CD14-positive monocyte (primary cell): ENCODE measurements at regions of chr11 and their contacts with region 1.

Region 1: DNA sequence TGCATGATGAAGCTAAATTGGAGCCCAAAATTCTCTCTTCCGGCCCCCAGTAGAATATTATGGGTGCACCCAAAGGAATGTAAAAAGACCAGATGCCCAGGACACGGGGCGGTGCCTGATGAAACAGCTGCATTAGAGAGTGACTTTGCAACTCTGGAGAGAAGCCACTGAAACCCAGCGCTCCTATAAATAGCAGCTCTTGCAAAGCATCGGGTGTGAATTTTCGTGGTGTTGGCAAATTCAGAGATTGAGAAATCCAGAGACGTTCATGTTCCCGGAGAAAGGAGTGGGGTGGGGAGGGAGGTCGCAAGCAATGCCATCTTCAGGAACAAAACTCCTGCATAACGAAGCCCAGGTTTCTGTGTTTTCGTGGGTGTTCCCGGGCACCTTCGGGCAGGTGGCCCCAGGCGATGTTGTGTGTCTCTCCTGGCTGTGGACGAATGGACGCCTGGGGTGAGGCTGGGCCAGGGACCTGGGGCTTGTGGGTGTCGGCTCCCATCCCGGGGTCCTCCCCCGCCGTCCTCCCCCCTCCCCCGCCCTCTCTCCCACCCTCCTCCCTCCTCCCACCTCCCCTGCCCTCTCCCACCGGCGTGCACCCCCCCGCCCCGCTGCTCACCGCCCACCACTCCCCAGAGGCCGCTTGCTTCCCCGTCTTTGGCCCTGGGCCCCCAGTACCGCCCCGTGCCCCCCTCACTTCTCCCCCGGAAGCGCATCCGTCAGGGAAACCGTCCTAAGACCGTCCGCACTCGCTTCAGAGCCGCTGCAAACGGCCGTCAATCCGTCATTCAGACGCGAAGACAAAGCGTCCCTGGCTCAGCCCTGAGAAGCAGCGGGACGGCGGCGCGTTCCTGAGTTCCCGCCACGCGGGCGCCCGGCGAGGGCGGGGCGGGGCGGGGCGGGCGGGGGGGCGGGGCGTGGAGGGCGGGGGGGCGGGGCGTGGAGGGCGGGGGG is 26.7 kb upstream of the TOLLIP start:
- DNase-seq: peak; percentile 87 to 93 (median 89)
- H3K4me3 ChIP-seq: peak overlapping the region; percentile 25 to 63 (median 36)
- H3K4me3 Mint-ChIP-seq: peak overlapping the region; percentile 72 to 81
- H3K27ac ChIP-seq: peak overlapping the region; percentile 73 to 85
- H3K27ac Mint-ChIP-seq: peak overlapping the region; percentile 81 to 96 (median 92)
- H3K4me1 ChIP-seq: peaks cover 14 to 30% of the 10 kb centered on the region in 2 donors
- H3K4me1 Mint-ChIP-seq: peaks cover 24% of the 10 kb centered on the region
- H3K27me3 ChIP-seq: no peaks in the 10 kb centered on the region
- H3K27me3 Mint-ChIP-seq: peaks cover 0 to 4% (median 1%) of the 10 kb centered on the region in 3 donors
- CTCF ChIP-seq: no peak

Region 2: DNA sequence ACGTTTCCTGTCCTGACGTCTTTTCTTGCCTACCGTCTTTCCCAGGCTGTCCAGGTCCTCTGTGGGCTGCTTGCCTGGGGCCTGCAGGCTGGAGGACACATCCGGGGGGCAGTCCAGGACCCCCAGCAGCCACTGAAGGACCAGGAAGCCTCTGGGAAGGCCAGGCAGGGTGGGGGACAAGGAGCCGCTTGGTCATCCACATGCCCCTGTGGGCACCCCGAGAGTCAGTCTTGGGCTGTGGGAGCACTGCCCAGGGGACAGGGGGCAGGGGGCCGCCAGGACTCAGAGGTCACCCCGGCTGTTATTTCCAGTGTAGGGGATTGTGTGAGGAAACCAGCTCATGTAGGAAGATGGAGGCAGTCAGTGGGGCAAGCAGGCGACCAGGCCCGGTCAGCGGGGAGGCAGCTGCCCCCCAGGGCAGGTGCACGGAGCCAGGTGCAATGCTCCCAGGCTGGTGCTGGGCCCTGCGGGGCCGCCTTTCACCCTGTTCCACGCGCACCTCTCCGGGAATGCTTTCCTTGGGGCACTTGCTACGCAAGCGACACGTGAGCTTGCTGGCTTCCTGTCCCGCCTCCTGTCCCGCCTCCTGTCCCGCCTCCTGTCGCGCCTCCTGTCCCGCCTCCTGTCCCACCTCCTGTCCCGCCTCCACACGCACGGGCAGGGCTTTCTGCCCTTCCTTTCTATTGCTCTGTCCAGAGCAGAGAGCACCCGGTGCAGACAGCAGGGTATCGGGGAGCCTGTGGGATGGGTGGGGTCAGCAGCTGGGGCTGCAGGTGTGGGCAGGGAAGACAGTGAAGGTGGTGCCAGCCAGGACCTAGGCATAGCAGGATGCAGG is 73.7 kb before region 1 on chr11:
- intact Hi-C with region 1: loop called (anchors 5 to 10 kb)
- DNase-seq: peak; percentile 81 to 84 (median 82)
- H3K4me3 ChIP-seq: peak overlapping the region; percentile 33 to 74 (median 54)
- H3K4me3 Mint-ChIP-seq: peak overlapping the region; percentile 77 to 89
- H3K27ac ChIP-seq: peak overlapping the region; percentile 32 to 75
- H3K27ac Mint-ChIP-seq: peak overlapping the region; percentile 67 to 93 (median 82)
- H3K4me1 ChIP-seq: peaks cover 16 to 18% of the 10 kb centered on the region in 2 donors
- H3K4me1 Mint-ChIP-seq: peaks cover 11% of the 10 kb centered on the region
- H3K27me3 ChIP-seq: no peaks in the 10 kb centered on the region
- H3K27me3 Mint-ChIP-seq: no peaks in the 10 kb centered on the region
- CTCF ChIP-seq: no peak

Region 3: DNA sequence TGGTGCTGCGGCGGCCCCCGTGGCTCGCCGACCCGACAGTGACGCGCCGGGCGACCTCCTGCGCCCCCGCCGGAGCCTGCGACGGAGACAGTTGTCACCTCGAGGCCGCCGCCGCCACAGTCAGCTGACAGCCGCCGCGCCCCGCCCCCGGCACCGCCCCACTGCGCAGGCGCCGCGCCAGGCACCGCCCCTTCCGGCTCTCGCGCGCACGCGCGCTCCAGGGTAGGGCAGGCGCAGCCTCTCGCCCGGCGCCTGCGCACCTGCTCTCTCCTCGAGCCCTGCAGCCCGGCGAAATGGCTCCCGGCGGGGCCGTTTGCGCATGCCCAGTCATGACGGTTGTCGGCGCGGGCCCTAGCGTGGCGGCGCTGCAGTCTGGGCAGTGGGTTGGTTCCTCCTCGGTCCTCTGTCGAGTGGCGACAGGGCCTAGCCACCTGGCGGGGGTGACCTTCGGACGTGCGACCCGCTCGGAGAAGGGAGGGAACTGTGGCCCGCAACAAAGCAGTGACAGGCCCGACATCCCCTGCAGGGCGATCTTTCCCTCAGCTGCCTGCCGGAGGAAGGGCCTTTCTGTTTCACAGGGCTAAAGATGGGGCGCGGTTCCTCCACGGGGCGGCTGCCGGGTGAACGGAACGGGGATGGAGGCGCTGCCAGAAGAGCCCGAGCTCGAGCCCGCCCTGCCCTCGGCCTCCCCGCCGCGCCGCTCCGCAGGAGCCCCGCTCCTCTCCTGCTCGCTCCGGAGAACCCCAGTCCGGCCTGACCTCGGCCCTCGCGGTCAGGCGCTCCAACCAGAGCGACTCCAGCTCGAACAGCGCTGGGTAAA is 26.4 kb before region 1 on chr11 and contains the start of gene TOLLIP:
- intact Hi-C with region 1: loop called (anchors 1 to 2 kb)
- DNase-seq: peak; percentile 94 to 95 (median 94)
- H3K4me3 ChIP-seq: peak within 1 kb of the TSS; percentile 76 to 87 (median 81)
- H3K4me3 Mint-ChIP-seq: peak within 1 kb of the TSS; percentile 76 to 83
- H3K27ac ChIP-seq: peak within 1 kb of the TSS; percentile 92
- H3K27ac Mint-ChIP-seq: peak within 1 kb of the TSS; percentile 89 to 97 (median 94)
- H3K4me1 ChIP-seq: peaks cover 51 to 53% of the 10 kb centered on the region in 2 donors
- H3K4me1 Mint-ChIP-seq: peaks cover 49% of the 10 kb centered on the region
- H3K27me3 ChIP-seq: no peaks in the 10 kb centered on the region
- H3K27me3 Mint-ChIP-seq: peaks cover 0 to 4% (median 2%) of the 10 kb centered on the region in 3 donors
- CTCF ChIP-seq: no peak
- polyA plus RNA-seq, gene TOLLIP: 67.9 to 72.1 (median 71.7) TPM

Region 4: DNA sequence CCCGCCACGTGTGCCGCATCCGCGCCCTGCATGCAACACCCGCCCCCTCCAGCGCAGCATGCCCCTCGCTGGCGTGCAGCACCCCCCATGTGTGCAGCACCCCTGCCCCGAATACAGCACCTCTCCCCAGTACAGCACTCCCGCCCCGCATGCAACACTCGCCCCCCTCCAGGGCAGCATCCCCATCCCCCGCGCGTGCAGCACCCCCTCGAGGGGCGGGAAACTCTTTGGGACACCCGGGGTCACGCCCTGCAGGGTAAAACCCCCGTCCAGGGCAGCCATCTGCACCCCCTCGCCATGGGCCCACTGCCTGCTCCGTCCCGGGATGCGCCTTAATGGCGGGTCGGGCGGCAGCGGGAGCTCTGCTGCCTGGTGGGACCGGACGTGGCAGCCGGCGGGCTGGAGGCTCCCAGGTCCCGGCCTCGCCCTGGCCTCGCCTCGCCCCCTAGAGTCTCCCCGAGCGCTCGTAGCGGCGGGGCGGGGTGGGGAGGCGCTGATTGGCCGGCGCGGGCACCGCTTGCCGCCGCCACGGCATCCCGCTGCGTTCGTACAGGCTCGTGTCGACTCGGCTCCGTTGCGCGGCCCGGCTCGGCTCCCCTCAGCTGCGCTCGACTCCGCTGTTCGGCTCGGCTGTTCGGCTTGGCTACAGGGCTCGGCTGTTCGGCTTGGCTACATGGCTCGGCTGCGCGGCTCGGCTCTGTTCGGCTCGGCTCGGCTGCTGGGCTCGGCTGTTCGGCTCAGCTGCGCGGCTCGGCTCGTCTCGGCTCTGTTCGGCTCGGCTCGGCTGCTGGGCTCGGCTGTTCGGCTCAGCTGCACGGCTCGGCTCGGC is 53.2 kb after region 1 on chr11:
- intact Hi-C with region 1: loop called in 1 of 2 experiments (anchors 10 kb)
- DNase-seq: peak; percentile 88 to 94 (median 94)
- H3K4me3 ChIP-seq: peak overlapping the region; percentile 17 to 64 (median 29)
- H3K4me3 Mint-ChIP-seq: peak overlapping the region; percentile 43 to 76
- H3K27ac ChIP-seq: no peak overlapping the region
- H3K27ac Mint-ChIP-seq: no peak overlapping the region
- H3K4me1 ChIP-seq: peaks cover 6 to 11% of the 10 kb centered on the region in 2 donors
- H3K4me1 Mint-ChIP-seq: peaks cover 5% of the 10 kb centered on the region
- H3K27me3 ChIP-seq: peaks cover 32 to 67% of the 10 kb centered on the region in 2 donors
- H3K27me3 Mint-ChIP-seq: peaks cover 65 to 80% (median 66%) of the 10 kb centered on the region in 3 donors
- CTCF ChIP-seq: no peak

Region 5: GRCh38 chr11:1411301-1411700 is 75.2 kb after region 1 on chr11:
- intact Hi-C with region 1: no loop called
- DNase-seq: no peak
- H3K4me3 ChIP-seq: no peak overlapping the region
- H3K4me3 Mint-ChIP-seq: no peak overlapping the region
- H3K27ac ChIP-seq: no peak overlapping the region
- H3K27ac Mint-ChIP-seq: no peak overlapping the region
- H3K4me1 ChIP-seq: no peaks in the 10 kb centered on the region
- H3K4me1 Mint-ChIP-seq: no peaks in the 10 kb centered on the region
- H3K27me3 ChIP-seq: no peaks in the 10 kb centered on the region
- H3K27me3 Mint-ChIP-seq: peaks cover 3 to 13% (median 6%) of the 10 kb centered on the region in 3 donors
- CTCF ChIP-seq: no peak